Activated T-helper 2 cell treated with anti-CD3 and anti-CD28 coated beads, Interferon-gamma antibody, Interleukin-2, Interleukin-4, amounts not matched to agents 10 μg/mL and 5 μg/mL and 100 μg/mL, durations not matched to agents 14 hours and 24 hours and 36 hours (primary cell): ENCODE measurements at regions of chr7 and their contacts with region 1.

Region 1: DNA sequence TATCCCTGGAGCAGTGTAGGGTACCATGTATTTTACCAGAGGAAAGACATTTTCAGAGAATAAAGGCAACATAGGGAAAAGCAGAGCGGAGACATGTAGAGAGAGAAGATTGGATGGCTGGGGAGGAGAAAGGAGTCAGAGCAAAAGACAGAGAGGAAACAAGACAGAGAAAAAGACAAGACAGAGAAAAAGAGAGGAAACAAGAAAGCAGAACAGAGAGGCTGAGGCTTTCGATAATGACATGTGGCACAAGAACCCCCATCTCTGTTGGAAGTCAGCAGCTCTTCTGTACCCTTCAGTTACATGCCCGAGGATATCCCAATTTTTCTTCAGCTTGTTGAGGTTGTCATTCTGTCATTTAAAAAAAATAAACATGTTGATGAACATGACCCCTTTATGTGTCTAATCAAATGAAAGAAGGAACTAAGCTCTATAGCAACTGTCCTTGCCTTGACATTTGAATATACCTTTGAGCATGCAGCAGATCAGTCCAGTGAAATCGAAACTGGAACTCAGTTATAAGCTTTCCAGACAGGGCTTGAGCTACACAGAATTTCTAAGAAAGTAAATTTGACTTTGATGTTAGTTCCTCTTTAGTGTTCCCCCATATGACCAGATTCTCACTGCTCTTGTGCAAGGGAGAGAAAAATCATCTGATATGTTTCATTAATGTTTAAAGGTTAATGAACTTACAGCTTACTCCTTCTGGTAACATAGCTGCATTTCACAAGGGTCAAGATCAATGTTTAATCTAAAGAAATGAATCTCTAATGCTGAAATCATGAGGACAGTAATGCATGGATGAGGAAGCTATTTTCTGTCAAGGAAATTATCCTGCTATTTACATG is 75.1 kb upstream of the SP4 start:
- DNase-seq: peak; percentile 31
- H3K4me3 Mint-ChIP-seq: peak overlapping the region; percentile 59
- H3K27ac Mint-ChIP-seq: peak overlapping the region; percentile 93
- H3K4me1 Mint-ChIP-seq: peaks cover 66% of the 10 kb centered on the region
- H3K27me3 Mint-ChIP-seq: no peaks in the 10 kb centered on the region

Region 2: GRCh38 chr7:21305455-21306235 is 47.1 kb before region 1 on chr7:
- intact Hi-C with region 1: loop called (anchors 5 kb)
- DNase-seq: no peak
- H3K4me3 Mint-ChIP-seq: no peak overlapping the region
- H3K27ac Mint-ChIP-seq: no peak overlapping the region
- H3K4me1 Mint-ChIP-seq: peaks cover 20% of the 10 kb centered on the region
- H3K27me3 Mint-ChIP-seq: no peaks in the 10 kb centered on the region

Region 3: DNA sequence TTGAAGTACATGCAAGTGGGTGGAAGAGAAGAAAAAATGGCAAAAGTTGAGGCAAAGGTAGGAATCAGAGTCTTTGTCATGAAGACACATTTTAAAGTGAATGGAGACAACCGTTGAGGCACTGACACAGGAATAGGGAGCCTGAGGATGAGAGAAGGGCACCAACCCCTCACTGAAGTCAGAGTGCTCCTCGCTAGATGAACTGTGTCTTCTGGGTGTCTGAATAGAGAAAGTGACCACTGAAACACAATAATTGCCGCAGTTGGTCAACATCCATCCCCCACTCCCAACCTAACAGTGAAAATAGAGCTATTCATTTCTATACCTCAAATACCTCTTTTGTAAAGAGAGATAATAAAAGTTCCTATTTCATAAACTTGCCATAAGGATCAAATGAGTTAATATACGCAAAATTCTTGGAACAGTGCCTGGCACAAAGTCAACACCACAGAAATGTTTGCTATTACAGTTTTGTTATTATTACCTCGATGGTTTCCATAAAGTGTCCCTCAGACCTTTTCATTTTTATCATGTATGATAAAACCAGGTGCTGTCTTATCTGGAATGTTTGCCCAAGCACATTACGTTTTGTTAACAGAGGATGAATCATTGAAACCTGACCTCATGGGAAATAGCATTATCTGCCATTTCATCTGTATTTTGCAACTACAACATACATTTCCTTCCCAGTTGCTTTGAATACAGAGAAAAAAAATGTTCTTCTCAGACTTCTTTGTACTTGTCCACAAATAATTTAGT is 13.3 kb after region 1 on chr7:
- intact Hi-C with region 1: loop called (anchors 1 kb)
- DNase-seq: no peak
- H3K4me3 Mint-ChIP-seq: no peak overlapping the region
- H3K27ac Mint-ChIP-seq: peak overlapping the region; percentile 25
- H3K4me1 Mint-ChIP-seq: peaks cover 56% of the 10 kb centered on the region
- H3K27me3 Mint-ChIP-seq: no peaks in the 10 kb centered on the region

Region 4: GRCh38 chr7:21383227-21384220 is 30.8 kb after region 1 on chr7:
- intact Hi-C with region 1: loop called (anchors 1 kb)
- DNase-seq: no peak
- H3K4me3 Mint-ChIP-seq: peak overlapping the region; percentile 51
- H3K27ac Mint-ChIP-seq: peak overlapping the region; percentile 64
- H3K4me1 Mint-ChIP-seq: peaks cover 35% of the 10 kb centered on the region
- H3K27me3 Mint-ChIP-seq: peaks cover 2% of the 10 kb centered on the region

Region 5: GRCh38 chr7:21939136-21939857 is 586.5 kb after region 1 on chr7:
- intact Hi-C with region 1: loop called (anchors 2 kb)
- DNase-seq: peak; percentile 30
- H3K4me3 Mint-ChIP-seq: peak overlapping the region; percentile 41
- H3K27ac Mint-ChIP-seq: peak overlapping the region; percentile 88
- H3K4me1 Mint-ChIP-seq: peaks cover 59% of the 10 kb centered on the region
- H3K27me3 Mint-ChIP-seq: no peaks in the 10 kb centered on the region